Tibial artery (tissue), 4 donors: ENCODE measurements at regions of chr11 and their contacts with region 1.

Region 1: DNA sequence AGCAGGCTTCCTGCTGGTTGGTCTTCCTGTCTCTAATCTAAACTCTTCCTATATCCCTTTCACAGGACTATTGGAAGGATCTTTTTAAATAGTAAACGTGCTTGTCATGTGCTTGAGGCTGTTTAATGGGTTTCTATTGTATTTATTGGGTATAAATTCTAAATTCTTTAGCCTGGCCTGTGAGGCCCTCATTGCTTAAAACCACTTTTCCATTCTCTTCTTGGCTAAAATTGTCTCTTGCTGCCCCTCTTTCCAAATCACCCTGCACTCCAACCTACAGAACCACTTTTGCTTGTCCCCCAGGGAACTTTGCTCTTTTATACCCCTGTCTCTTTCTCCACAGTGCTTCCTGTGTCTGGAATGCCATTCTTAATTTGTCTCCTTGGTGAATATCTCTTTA is 46.4 kb upstream of the MUC15 start:
- DNase-seq: no peak
- H3K4me3 ChIP-seq: no peak overlapping the region
- H3K27ac ChIP-seq: no peak overlapping the region
- H3K4me1 ChIP-seq: no peaks in the 10 kb centered on the region
- H3K27me3 ChIP-seq: no peaks in the 10 kb centered on the region
- CTCF ChIP-seq: no peak

Region 2: GRCh38 chr11:26696330-26696729 is 77.9 kb after region 1 on chr11:
- intact Hi-C with region 1: loop called (anchors 10 kb)
- DNase-seq: no peak
- H3K4me3 ChIP-seq: no peak overlapping the region
- H3K27ac ChIP-seq: no peak overlapping the region
- H3K4me1 ChIP-seq: no peaks in the 10 kb centered on the region
- H3K27me3 ChIP-seq: no peaks in the 10 kb centered on the region
- CTCF ChIP-seq: no peak

Region 3: GRCh38 chr11:26715133-26715532 is 96.7 kb after region 1 on chr11:
- intact Hi-C with region 1: no loop called
- DNase-seq: no peak
- H3K4me3 ChIP-seq: no peak overlapping the region
- H3K27ac ChIP-seq: no peak overlapping the region
- H3K4me1 ChIP-seq: no peaks in the 10 kb centered on the region
- H3K27me3 ChIP-seq: no peaks in the 10 kb centered on the region
- CTCF ChIP-seq: no peak